PC-9 (cell line): ENCODE measurements at regions of chr2 and their contacts with region 1.

Region 1: DNA sequence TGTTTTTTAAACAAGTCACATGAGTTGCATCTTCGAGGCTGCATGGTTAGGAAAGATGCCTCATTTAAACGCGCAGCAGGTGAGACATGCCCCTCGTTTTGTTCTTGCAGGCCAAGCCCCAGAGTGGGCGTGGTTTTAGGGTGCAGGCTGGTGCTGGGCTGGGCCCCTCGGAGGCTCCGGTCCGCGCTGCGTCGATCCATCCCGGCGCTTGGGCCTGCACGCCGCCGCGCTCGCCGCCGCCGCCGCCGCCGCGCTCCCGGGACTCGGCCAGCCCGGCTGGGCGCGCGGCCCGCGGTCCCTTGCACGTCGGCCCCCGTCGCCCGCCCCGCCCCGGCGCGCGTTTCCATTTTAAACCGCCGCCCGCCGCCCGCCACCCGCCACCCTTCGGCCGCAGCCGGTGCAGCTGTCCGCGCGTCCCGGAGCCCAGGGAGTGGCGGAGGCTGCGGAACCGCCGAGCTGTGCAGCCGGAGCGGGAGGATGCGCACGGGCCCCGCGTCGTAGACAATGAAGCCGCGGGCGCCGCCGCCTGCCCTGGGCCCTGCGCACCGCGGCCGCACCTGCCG is 175.5 kb downstream of the AGAP1 start:
- DNase-seq: peak; percentile 79 to 94
- H3K4me3 ChIP-seq: peak overlapping the region; percentile 41; the same call in 1 of the 2 replicates
- H3K27ac ChIP-seq: no peak overlapping the region
- H3K4me1 ChIP-seq: peaks cover 54% of the 10 kb centered on the region
- H3K27me3 ChIP-seq: no peaks in the 10 kb centered on the region
- CTCF ChIP-seq: no peak

Region 2: DNA sequence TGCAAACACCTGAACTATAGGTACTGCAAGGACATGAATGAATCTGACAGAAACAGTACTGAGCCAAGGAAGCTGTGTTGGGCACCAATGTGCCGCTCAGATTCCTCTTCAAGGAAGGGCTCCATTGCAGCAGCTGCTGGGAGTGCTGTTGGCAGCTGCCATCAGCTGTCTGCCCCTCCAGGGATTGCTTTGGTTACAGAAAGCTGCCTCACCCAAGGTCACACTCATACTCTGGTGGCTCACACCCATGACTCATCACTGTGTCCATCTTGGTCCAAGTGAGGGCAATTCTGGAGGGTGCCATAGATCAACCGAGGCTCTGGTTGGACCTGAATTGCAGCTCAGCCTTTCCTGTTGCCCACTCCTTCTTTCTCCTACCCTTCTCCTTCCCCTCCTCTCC is 1776.6 kb before region 1 on chr2:
- CTCF ChIA-PET with region 1: no interaction called
- POLR2A ChIA-PET with region 1: interaction called, 34 read pairs
- intact Hi-C with region 1: no loop called
- DNase-seq: peak in 1 of 2 experiments; percentile 27
- H3K4me3 ChIP-seq: no peak overlapping the region
- H3K27ac ChIP-seq: no peak overlapping the region
- H3K4me1 ChIP-seq: no peaks in the 10 kb centered on the region
- H3K27me3 ChIP-seq: peaks cover 7% of the 10 kb centered on the region; the same call in 1 of the 2 replicates
- CTCF ChIP-seq: no peak

Region 3: DNA sequence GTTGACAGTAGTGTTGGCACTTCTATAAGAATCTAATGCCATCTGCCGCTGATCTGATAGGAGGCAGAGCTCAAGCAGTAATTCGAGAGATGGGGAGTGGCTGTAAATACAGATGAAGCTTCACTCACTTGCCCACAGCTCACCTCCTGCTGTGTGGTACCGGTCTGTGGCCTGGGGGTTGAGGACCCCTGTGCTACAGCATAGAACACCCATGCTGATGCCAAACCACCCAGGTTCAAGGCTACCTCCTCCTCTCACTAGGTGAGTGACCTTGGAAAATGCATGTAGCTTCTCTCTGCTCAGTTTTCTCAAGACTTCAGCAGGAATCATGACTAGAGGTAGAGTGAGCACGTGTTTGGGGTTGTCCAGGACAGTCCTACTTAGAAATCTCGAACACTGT is 454.1 kb before region 1 on chr2:
- CTCF ChIA-PET with region 1: interaction called, 11 read pairs
- POLR2A ChIA-PET with region 1: no interaction called
- intact Hi-C with region 1: no loop called
- DNase-seq: no peak
- H3K4me3 ChIP-seq: no peak overlapping the region
- H3K27ac ChIP-seq: no peak overlapping the region
- H3K4me1 ChIP-seq: peaks cover 11% of the 10 kb centered on the region; the same call in 1 of the 2 replicates
- H3K27me3 ChIP-seq: no peaks in the 10 kb centered on the region
- CTCF ChIP-seq: no peak

Region 4: DNA sequence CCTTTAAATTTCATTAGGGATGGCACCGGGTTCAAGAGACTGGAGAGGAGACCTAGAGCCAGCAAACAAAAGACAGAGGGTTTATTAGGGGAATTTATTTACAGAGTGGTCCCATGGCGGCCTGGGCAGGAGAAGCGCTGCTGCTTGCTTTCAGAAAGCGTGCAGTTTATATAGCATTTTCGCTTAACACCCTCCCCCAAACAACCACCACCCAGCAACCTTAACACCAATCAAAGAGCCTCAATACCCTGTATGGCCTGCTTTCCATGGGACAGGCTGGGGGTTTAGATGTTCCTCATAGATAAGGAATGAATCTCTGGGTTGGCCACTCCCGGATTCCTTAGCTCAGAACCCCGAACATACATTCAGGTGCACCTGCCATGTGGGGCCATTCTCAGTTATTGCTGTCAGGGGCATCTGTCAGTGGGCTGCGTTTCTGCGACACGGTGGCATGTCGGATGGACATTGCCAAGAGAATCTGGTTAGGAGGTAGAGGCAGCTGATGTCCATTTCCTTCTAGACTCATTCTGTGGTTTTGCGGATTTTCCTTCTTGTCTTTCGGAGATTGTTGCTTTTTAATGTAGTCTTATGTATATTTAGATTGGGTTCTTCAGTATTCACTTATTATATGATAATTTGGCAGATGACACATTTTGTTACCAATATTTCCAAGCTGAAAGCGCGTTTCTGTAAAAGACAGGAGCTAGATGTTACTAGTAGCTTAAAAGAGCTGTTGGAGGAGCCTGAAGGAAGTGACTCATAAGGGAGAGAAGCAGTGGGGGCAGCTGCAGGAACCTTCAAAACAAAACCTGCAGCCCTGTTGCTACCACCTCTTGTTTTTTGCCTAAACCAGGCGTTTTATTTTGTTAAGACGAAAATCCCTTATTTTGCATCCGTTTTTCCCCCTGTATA is 168.3 kb before region 1 on chr2:
- CTCF ChIA-PET with region 1: no interaction called
- POLR2A ChIA-PET with region 1: no interaction called
- intact Hi-C with region 1: loop called (anchors 10 kb)
- DNase-seq: peak; percentile 48 to 76
- H3K4me3 ChIP-seq: peak overlapping the region; percentile 29; the same call in 1 of the 2 replicates
- H3K27ac ChIP-seq: peak overlapping the region; percentile 61
- H3K4me1 ChIP-seq: peaks cover 65% of the 10 kb centered on the region
- H3K27me3 ChIP-seq: no peaks in the 10 kb centered on the region
- CTCF ChIP-seq: no peak

Region 5: DNA sequence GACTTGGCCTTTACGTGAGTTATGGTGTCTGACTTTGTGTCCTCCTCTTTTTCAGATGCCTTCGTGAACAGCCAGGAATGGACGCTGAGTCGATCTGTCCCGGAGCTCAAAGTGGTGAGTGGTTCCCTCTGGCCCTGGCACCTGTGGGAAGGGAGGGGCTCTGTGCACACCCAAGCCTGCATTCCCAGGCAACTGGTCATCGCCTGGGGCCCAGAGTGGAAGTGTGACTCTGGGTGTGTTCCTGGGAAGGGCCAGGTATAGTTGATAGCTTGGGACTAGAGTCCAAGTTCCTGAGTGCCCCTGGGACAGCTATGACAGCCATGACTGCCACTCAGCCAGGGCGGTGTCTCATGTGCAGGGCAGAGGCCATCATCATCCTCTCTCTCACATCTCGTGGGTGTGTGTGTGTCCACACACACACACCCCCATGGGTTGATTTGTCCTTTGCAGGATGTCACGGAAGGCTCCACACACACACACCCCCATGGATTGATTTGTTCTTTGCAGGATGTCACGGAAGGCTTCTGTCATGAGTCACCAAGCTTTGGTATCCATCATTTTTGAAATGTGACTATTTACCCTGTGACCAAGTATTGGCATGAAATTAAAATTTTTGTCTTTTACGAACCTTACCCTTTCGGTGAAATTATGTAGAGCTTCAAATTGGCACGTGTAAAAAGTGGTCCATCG is 39.9 kb after region 1 on chr2:
- CTCF ChIA-PET with region 1: interaction called, 3 read pairs
- POLR2A ChIA-PET with region 1: no interaction called
- intact Hi-C with region 1: loop called (anchors 1 kb)
- DNase-seq: peak; percentile 99 to 100
- H3K4me3 ChIP-seq: peak overlapping the region; percentile 9; the same call in 1 of the 2 replicates
- H3K27ac ChIP-seq: peak overlapping the region; percentile 96
- H3K4me1 ChIP-seq: peaks cover 57% of the 10 kb centered on the region
- H3K27me3 ChIP-seq: no peaks in the 10 kb centered on the region
- CTCF ChIP-seq: no peak

Region 6: GRCh38 chr2:235725016-235725489 is 55.7 kb after region 1 on chr2:
- CTCF ChIA-PET with region 1: no interaction called
- POLR2A ChIA-PET with region 1: no interaction called
- intact Hi-C with region 1: loop called (anchors 5 kb)
- DNase-seq: no peak
- H3K4me3 ChIP-seq: no peak overlapping the region
- H3K27ac ChIP-seq: 0 out of 2 replicates have a peak overlapping the region, but pooled peaks have one; percentile 6
- H3K4me1 ChIP-seq: peaks cover 34% of the 10 kb centered on the region
- H3K27me3 ChIP-seq: no peaks in the 10 kb centered on the region
- CTCF ChIP-seq: no peak

Region 7: DNA sequence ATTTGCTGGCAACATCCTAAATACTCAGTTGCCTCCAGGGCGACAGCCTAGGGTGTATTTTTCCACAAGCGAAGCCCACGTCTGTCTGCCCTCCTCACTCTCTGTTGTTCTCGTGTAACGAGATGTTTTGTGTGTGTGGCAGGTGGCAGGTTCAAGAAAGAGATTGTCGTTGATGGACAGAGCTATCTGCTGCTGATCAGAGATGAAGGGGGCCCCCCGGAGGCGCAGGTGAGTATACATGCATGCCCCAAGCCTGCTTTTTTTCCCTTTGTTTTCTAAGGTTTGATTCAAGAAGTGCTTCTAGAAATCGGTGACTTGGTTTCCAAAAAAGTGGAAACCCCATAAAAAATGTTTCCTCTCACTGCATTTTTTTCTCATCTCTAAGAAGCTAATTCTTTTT is 71.5 kb after region 1 on chr2:
- CTCF ChIA-PET with region 1: interaction called, 4 read pairs
- POLR2A ChIA-PET with region 1: no interaction called
- intact Hi-C with region 1: loop called (anchors 2 kb)
- DNase-seq: peak in 1 of 2 experiments; percentile 62
- H3K4me3 ChIP-seq: no peak overlapping the region
- H3K27ac ChIP-seq: 0 out of 2 replicates have a peak overlapping the region, but pooled peaks have one; percentile 0
- H3K4me1 ChIP-seq: peaks cover 3% of the 10 kb centered on the region
- H3K27me3 ChIP-seq: no peaks in the 10 kb centered on the region
- CTCF ChIP-seq: peak; percentile 75